Activated T-helper 2 cell treated with anti-CD3 and anti-CD28 coated beads, Interferon-gamma antibody, Interleukin-2, Interleukin-4, amounts not matched to agents 10 μg/mL and 5 μg/mL and 100 μg/mL, durations not matched to agents 14 hours and 24 hours and 36 hours (primary cell): ENCODE measurements at regions of chr6 and their contacts with region 1.

Region 1: DNA sequence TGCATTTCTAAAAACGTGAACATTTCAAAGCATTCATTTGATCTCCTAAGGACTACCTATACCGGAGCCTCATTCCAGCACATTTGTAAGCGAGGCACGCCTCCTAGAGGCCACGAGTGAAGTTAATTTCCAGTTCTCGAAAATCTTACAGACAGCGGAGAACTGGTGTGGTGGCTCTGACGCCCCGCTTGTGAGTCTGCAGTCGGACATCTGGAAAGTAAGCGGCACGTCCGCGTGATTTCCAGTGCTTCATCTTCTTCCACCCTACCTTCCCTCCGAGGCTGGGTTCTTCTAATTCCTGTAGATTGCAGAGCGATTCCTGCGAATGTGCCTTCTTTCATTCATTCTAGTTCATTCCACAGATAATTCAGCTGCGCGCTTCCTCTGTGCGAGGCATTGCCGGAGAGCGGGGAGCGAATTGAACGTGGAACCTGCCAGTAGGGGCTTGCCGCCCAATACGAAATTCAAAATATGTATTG is 810 bp upstream of the PRIM2 start:
- DNase-seq: peak; percentile 76
- H3K4me3 Mint-ChIP-seq: peak overlapping the region; percentile 100
- H3K27ac Mint-ChIP-seq: peak overlapping the region; percentile 95
- H3K4me1 Mint-ChIP-seq: peaks cover 23% of the 10 kb centered on the region
- H3K27me3 Mint-ChIP-seq: peaks cover 12% of the 10 kb centered on the region

Region 2: GRCh38 chr6:56955171-56956045 is 361.2 kb before region 1 on chr6:
- intact Hi-C with region 1: loop called (anchors 1 kb)
- DNase-seq: peak; percentile 54
- H3K4me3 Mint-ChIP-seq: peak overlapping the region; percentile 74
- H3K27ac Mint-ChIP-seq: no peak overlapping the region
- H3K4me1 Mint-ChIP-seq: peaks cover 21% of the 10 kb centered on the region
- H3K27me3 Mint-ChIP-seq: peaks cover 67% of the 10 kb centered on the region

Region 3: GRCh38 chr6:57048577-57048976 is 268.0 kb before region 1 on chr6:
- intact Hi-C with region 1: loop called (anchors 2 kb)
- DNase-seq: no peak
- H3K4me3 Mint-ChIP-seq: peak overlapping the region; percentile 79
- H3K27ac Mint-ChIP-seq: peak overlapping the region; percentile 24
- H3K4me1 Mint-ChIP-seq: peaks cover 26% of the 10 kb centered on the region
- H3K27me3 Mint-ChIP-seq: peaks cover 20% of the 10 kb centered on the region

Region 4: GRCh38 chr6:57172136-57173055 is 144.2 kb before region 1 on chr6 and contains the start of gene BAG2:
- intact Hi-C with region 1: loop called (anchors 1 kb)
- DNase-seq: peak; percentile 92
- H3K4me3 Mint-ChIP-seq: peak within 1 kb of the TSS; percentile 97
- H3K27ac Mint-ChIP-seq: peak within 1 kb of the TSS; percentile 93
- H3K4me1 Mint-ChIP-seq: peaks cover 25% of the 10 kb centered on the region
- H3K27me3 Mint-ChIP-seq: no peaks in the 10 kb centered on the region
- total RNA-seq, gene BAG2: 13.6 and 14.3 TPM in 2 replicates

Region 5: GRCh38 chr6:57207141-57207540 is 109.5 kb before region 1 on chr6:
- intact Hi-C with region 1: loop called (anchors 5 kb)
- DNase-seq: no peak
- H3K4me3 Mint-ChIP-seq: no peak overlapping the region
- H3K27ac Mint-ChIP-seq: no peak overlapping the region
- H3K4me1 Mint-ChIP-seq: peaks cover 27% of the 10 kb centered on the region
- H3K27me3 Mint-ChIP-seq: no peaks in the 10 kb centered on the region

Region 6: GRCh38 chr6:57242505-57242904 is 74.1 kb before region 1 on chr6:
- intact Hi-C with region 1: no loop called
- DNase-seq: no peak
- H3K4me3 Mint-ChIP-seq: no peak overlapping the region
- H3K27ac Mint-ChIP-seq: no peak overlapping the region
- H3K4me1 Mint-ChIP-seq: no peaks in the 10 kb centered on the region
- H3K27me3 Mint-ChIP-seq: peaks cover 3% of the 10 kb centered on the region

Region 7: DNA sequence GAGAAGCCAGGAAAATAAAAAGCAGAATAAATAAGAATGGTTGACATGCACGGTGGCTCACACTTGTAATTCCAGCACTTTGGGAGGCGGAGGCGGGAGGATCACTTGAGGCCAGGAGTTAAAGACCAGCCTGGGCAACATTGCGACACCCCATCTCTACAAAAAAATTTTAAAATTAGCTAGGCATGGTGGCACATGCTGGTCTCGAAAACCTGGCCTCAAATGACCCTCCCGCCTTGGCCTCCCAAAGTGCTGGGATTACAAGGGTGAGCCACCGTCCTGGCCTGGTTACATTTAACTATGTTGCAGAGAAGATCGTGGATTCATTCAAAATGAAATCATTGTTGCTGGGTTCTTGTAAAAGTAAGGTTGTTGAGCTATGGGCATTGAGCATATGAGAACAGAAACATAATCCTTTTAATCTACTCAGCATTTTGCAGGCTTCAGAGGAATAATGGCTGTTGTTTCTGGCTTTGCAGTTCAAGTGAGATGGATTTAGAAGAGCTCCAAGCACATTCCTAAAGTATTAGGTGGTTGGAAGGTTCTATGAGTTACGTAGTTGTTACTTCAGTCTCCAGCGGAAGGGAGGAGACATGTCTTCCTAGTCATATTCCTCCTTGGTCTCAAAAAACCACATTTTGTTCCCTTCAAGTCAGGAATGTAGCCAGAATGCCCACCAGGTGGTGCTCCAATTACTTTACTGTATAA is 48.9 kb before region 1 on chr6:
- intact Hi-C with region 1: loop called (anchors 1 kb)
- DNase-seq: no peak
- H3K4me3 Mint-ChIP-seq: no peak overlapping the region
- H3K27ac Mint-ChIP-seq: no peak overlapping the region
- H3K4me1 Mint-ChIP-seq: peaks cover 8% of the 10 kb centered on the region
- H3K27me3 Mint-ChIP-seq: no peaks in the 10 kb centered on the region